ENCODE measurements at regions of chr12 and their contacts with region 1.

Region 1: DNA sequence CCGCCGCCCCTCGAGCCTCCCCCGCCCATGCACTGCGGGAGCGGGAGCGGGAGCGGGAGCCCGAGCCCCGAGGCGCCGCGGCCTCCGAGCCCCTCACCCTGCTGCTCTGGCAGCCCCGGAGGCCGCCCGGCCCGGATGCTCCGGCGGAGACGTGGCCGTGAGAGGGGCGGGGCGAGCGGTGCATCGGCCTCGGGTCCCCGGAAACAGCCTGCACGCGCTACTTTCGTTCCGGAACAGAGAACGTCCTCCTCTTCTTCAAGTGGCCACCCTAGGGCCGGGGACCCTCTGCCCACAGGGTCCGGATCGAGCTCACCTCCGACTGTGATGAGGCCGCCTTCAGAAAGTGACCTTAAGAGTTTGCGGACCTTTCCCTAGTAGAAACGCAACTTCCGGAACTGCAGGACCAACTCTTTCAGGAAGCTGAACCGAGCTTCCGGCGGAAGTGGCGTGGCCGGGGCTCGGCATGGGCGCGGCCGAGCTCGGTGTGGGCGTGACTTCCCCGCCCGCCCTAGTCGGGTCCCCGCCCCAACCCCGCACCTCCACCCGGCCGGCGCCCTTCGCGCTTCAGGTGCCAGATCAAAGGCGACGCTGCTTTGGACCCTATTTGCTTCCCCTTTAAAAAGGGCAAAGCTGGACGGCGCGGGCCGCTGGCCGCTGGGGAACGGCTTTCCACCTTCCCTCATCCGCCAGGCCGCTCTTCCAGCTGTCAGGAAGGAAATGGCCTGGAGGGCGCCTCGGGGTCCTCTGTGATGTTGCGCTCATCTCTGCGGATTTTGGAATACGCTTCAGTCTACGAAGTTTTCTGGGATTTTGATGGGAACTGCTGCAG is at the start of gene GOLGA3:
- DNase-seq: peak; percentile 91
- H3K4me3 Mint-ChIP-seq: peak within 1 kb of the TSS; percentile 99
- H3K27ac Mint-ChIP-seq: peak within 1 kb of the TSS; percentile 100
- H3K4me1 Mint-ChIP-seq: peaks cover 43% of the 10 kb centered on the region
- H3K27me3 Mint-ChIP-seq: peaks cover 2% of the 10 kb centered on the region
- total RNA-seq, gene GOLGA3: 78.7 and 86.9 TPM in 2 replicates

Region 2: DNA sequence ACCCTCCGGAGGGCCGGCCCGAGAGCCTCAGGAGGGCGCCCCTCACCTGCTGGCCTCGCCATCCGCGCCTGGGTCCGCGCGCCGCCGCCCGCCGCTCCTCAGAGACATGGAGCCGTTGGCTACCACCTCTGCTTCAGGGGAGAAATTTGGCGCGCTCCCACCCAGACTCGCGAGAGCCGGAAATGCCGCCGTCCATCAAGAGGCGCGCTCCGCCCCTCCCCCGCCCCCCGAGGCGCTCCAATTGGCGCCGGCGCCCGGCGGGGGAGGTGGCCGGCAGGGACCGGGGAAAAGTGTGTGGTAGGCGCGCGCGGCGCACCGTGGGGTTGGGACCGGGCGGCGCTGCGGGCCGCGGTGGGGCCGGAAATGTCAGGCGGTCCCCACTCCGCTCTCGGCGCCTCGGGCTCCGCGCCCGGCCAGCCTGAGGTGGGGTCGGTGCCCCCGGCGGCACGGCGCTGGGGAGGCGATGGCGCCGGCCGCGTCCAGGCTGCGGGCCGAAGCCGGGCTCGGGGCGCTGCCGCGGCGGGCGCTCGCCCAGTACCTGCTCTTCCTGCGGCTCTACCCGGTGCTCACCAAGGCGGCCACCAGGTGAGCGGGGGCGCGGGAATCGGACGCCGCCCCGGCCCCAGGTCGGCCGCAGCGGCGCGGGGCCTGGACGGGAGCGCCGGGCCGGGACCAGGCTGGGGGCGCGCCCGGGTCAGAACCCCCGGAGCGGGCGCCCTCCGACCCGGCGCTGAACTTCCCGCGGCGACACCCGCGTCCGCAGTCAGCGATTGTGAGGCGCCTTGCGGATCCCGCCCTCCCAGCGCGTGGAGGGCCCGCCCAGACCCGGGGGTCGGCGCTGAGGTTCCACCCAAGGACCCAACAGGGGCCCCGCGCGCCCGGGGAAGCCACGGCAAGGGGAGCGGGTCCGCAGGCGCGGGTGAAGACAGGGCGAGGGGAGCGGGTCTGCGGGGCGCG is 141.4 kb before region 1 on chr12 and contains the starts of genes POLE and PXMP2:
- intact Hi-C with region 1: loop called (anchors 2 kb)
- DNase-seq: peak; percentile 91
- H3K4me3 Mint-ChIP-seq: peak within 1 kb of the TSS; percentile 84
- H3K27ac Mint-ChIP-seq: peak within 1 kb of the TSS; percentile 80
- H3K4me1 Mint-ChIP-seq: peaks cover 26% of the 10 kb centered on the region
- H3K27me3 Mint-ChIP-seq: no peaks in the 10 kb centered on the region
- total RNA-seq, gene POLE: 168 and 170 TPM in 2 replicates
- total RNA-seq, gene PXMP2: 21.5 and 23.3 TPM in 2 replicates

Region 3: GRCh38 chr12:132761032-132761920 is 67.6 kb before region 1 on chr12 and contains the start of gene ANKLE2:
- intact Hi-C with region 1: loop called (anchors 1 kb)
- DNase-seq: peak; percentile 74
- H3K4me3 Mint-ChIP-seq: peak within 1 kb of the TSS; percentile 93
- H3K27ac Mint-ChIP-seq: peak within 1 kb of the TSS; percentile 96
- H3K4me1 Mint-ChIP-seq: peaks cover 24% of the 10 kb centered on the region
- H3K27me3 Mint-ChIP-seq: no peaks in the 10 kb centered on the region
- total RNA-seq, gene ANKLE2: 151 and 156 TPM in 2 replicates

Region 4: GRCh38 chr12:132986001-132986912 is 157.3 kb after region 1 on chr12 and contains the start of gene ZNF26:
- intact Hi-C with region 1: loop called (anchors 1 kb)
- DNase-seq: peak; percentile 84
- H3K4me3 Mint-ChIP-seq: peak within 1 kb of the TSS; percentile 90
- H3K27ac Mint-ChIP-seq: peak within 1 kb of the TSS; percentile 92
- H3K4me1 Mint-ChIP-seq: peaks cover 22% of the 10 kb centered on the region
- H3K27me3 Mint-ChIP-seq: no peaks in the 10 kb centered on the region
- total RNA-seq, gene ZNF26: 18.2 and 22.1 TPM in 2 replicates

Region 5: DNA sequence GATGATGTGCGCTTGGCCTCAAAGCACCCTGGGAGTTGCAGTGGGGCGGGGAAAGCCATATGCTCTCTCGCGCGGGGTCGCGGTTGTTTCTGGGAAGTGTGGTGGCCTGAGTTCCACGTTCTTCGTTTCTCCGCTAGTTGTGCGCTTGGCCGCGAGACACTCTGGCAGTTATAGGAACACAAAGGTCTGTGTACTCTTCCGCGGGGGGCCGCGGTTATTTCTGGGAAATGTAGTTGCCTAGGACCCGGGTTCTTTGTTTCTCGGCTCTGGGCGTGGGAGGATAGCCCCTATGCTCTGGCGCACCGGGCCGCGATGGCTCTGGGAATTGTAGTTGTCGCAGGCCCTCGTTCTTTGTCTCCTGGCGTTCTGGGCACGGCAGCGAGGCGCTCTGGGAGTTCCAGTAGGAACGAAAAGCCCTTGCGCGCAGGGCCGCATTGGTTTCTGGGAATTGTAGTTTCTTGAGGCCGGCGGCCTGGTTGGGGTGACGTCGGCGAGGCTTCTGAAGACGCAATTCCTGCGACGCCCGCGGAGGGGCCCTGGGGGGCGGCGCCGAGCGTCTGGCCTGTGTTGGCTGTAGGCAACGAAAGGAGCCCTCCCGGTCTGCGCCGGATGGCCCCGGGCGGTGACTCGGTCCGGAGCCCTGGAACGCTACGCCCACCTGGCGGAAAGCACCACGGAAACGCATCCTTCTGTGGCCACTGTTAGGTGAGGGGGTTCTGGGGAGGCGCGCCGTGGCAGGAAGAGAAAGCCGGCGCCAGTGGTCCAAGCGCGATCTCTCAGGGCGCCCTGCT is 251.6 kb after region 1 on chr12 and contains the start of gene ZNF140:
- intact Hi-C with region 1: loop called (anchors 1 kb)
- DNase-seq: peak; percentile 93
- H3K4me3 Mint-ChIP-seq: no peak within 1 kb of the TSS
- H3K27ac Mint-ChIP-seq: peak within 1 kb of the TSS; percentile 84
- H3K4me1 Mint-ChIP-seq: no peaks in the 10 kb centered on the region
- H3K27me3 Mint-ChIP-seq: no peaks in the 10 kb centered on the region
- total RNA-seq, gene ZNF140: 15.0 and 15.1 TPM in 2 replicates